T-cell (primary cell): ENCODE measurements at regions of chr19 and their contacts with region 1.

Region 1: DNA sequence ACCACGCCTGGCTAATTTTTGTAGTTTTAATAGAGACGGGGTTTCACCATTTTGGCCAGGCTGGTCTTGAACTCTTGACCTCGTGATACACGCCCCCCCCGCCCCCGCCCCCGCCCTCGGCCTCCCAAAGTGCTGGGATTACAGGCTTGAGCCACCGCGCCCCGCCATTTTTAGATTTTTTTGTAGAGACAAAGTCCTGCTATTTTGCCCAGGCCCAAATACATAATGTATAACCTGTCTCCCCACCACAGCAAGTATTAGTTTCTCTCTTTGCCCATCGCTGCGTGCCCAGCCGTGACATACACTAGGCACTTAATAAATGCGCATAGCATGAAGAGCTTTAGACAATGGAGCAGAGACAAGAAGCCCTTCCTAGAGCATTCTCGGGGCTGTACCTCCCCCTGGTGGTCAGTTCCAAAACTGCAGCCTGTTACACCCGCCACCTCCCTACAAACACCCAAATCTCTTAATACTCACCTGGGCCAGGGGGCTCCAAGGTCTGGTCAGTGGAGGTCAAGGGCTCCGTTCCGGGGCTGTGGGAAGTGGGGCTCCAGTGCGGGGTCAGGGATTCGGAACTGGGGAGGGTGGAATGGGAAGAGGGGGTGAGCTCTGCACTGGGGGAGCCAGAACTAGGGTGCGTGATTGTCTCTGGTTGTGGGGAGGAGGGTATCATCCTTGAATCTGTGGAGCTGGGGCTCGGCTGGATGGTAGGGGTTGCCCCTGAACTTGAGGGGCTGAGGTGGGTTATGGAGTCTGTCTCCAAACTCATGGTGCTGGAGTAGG is 22.5 kb downstream of the IQCN start:
- DNase-seq: peak; percentile 41 to 90 (median 74)
- ATAC-seq: peak; percentile 72 to 86 (median 83)
- H3K4me3 ChIP-seq: no peak overlapping the region
- H3K4me3 Mint-ChIP-seq: no peak overlapping the region
- H3K27ac ChIP-seq: no peak overlapping the region
- H3K27ac Mint-ChIP-seq: no peak overlapping the region
- H3K4me1 ChIP-seq: peaks cover 0 to 5% of the 10 kb centered on the region in 2 experiments
- H3K4me1 Mint-ChIP-seq: peaks cover 3 to 13% (median 4%) of the 10 kb centered on the region in 3 donors
- H3K27me3 ChIP-seq: peaks cover 0 to 57% of the 10 kb centered on the region in 2 experiments
- H3K27me3 Mint-ChIP-seq: peaks cover 26 to 30% of the 10 kb centered on the region in 2 donors

Region 2: DNA sequence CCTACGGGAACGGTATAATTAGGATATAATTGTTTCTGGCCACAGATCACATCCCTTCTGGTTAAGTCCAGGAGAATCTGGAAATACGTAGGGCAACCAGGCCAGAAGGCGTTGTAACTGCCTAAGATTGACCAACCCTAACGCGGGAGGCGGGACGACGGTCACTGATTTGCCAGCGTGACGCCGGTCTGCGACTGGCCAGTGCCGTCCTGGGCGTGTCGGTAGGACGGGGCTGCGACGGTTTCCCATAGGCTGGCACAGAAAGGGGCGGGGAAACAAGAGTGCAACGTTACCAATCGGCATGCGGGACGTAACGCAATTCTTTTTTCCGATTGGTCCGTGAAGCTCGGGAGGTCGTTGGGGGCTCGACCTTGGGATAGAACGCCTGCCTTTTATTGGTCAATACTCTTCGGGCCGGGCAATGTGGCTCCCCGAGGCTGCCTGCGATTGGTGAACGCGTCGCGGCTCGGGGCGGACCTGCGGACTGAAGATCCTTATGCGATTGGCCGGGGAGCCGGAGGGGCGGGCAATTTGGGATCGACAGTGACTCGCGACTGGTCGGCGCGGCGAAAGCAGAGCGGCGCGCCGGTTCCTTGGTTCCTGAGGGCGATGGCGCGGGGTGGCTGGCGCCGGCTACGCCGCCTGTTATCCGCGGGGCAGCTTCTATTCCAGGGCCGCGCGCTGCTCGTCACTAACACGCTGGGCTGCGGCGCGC is 58.9 kb before region 1 on chr19 and contains the start of gene MPV17L2:
- CTCF ChIA-PET with region 1: interaction called, 3 to 33 read pairs
- POLR2A ChIA-PET with region 1: no interaction called
- DNase-seq: peak; percentile 92 to 99 (median 99)
- ATAC-seq: peak; percentile 87 to 93 (median 92)
- H3K4me3 ChIP-seq: peak within 1 kb of the TSS; percentile 83 to 86
- H3K4me3 Mint-ChIP-seq: peak within 1 kb of the TSS; percentile 87 to 95 (median 87)
- H3K27ac ChIP-seq: peak within 1 kb of the TSS; percentile 84
- H3K27ac Mint-ChIP-seq: peak within 1 kb of the TSS; percentile 95 to 97
- H3K4me1 ChIP-seq: peaks cover 12 to 29% of the 10 kb centered on the region in 2 experiments
- H3K4me1 Mint-ChIP-seq: peaks cover 21 to 24% (median 23%) of the 10 kb centered on the region in 3 donors
- H3K27me3 ChIP-seq: no peaks in the 10 kb centered on the region
- H3K27me3 Mint-ChIP-seq: no peaks in the 10 kb centered on the region
- total RNA-seq, gene MPV17L2: 3.8 to 8.2 (median 8.1) TPM

Region 3: GRCh38 chr19:18218600-18218999 is 33.2 kb before region 1 on chr19:
- CTCF ChIA-PET with region 1: no interaction called
- POLR2A ChIA-PET with region 1: no interaction called
- DNase-seq: no peak
- ATAC-seq: no peak
- H3K4me3 ChIP-seq: no peak overlapping the region
- H3K4me3 Mint-ChIP-seq: no peak overlapping the region
- H3K27ac ChIP-seq: no peak overlapping the region
- H3K27ac Mint-ChIP-seq: no peak overlapping the region
- H3K4me1 ChIP-seq: peaks cover 0 to 4% of the 10 kb centered on the region in 2 experiments
- H3K4me1 Mint-ChIP-seq: peaks cover 0 to 7% (median 3%) of the 10 kb centered on the region in 3 donors
- H3K27me3 ChIP-seq: peaks cover 0 to 51% of the 10 kb centered on the region in 2 experiments
- H3K27me3 Mint-ChIP-seq: peaks cover 7 to 30% of the 10 kb centered on the region in 2 donors